Ascending aorta (tissue), 2 donors: ENCODE measurements at regions of chr4 and their contacts with region 1.

Region 1: DNA sequence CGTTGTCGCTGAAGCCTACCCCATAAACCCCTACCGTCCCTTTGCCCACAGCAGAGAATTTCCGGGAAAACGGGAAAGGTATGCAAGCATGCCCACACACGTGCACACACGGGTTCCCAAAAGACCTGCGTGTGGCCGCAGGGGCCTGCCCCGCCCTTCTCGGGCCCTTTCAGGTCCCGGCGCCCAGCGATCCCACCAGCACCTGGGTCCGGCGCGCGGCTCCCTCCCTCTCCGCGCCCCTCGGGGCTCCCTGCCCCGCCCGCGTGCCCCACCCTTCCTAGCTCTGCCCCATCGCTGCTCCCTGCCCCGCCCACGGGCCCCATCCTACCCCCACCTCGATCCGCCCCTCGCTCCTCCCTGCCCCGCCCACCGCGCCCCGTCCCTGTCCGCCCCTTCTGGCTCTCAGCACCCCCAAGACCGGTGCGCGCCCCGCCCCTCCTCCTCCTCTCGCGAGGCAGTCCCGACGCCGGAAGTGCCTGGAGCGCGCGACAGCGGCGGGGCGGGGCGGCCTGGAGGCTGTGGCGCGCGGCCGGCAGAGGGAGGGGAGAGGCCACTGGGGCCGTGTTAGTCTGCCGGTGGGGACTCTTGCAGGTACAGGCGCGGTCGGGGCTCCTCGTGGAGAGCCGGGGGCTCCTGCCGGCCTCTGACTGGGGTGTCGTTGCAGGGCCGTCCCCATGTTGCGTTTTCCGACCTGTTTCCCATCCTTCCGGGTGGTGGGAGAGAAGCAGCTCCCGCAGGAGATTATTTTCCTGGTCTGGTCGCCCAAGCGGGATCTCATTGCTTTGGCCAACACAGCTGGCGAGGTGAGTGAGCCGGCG is at the start of gene ANAPC4:
- DNase-seq: peak; percentile 83 to 95
- H3K4me3 ChIP-seq: peak within 1 kb of the TSS; percentile 79 to 94
- H3K27ac ChIP-seq: peak within 1 kb of the TSS; percentile 71 to 85
- H3K4me1 ChIP-seq: peaks cover 0 to 3% of the 10 kb centered on the region in 2 donors
- H3K27me3 ChIP-seq: no peaks in the 10 kb centered on the region
- CTCF ChIP-seq: peak in 1 of 3 experiments; percentile 3
- total RNA-seq, gene ANAPC4: 23.4 TPM

Region 2: DNA sequence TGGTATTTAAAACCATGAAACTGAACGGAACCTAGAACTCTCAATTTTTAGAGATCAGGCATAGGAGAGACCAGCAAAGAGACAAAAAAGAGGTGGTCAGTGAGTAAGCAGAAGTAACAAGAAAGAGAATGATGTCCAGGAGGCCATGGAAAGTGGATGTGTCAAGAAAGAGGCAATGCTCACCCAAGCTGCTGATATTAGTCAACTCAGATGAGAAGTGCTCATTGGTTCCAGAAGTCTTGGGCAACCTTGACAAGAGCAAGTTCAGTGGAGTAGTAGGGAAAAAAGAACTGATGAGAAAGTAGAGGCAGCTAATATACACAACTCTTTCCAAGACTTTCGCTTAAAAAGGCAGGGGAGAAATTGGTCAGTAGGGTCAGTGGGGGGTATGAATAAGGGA is 441.1 kb before region 1 on chr4:
- intact Hi-C with region 1: no loop called
- DNase-seq: no peak
- H3K4me3 ChIP-seq: no peak overlapping the region
- H3K27ac ChIP-seq: no peak overlapping the region
- H3K4me1 ChIP-seq: no peaks in the 10 kb centered on the region
- H3K27me3 ChIP-seq: no peaks in the 10 kb centered on the region
- CTCF ChIP-seq: no peak

Region 3: GRCh38 chr4:25290490-25291067 is 86.4 kb before region 1 on chr4:
- intact Hi-C with region 1: no loop called
- DNase-seq: no peak
- H3K4me3 ChIP-seq: no peak overlapping the region
- H3K27ac ChIP-seq: no peak overlapping the region
- H3K4me1 ChIP-seq: no peaks in the 10 kb centered on the region
- H3K27me3 ChIP-seq: no peaks in the 10 kb centered on the region
- CTCF ChIP-seq: no peak

Region 4: GRCh38 chr4:25312496-25313200 is 64.3 kb before region 1 on chr4 and contains the start of gene ZCCHC4:
- intact Hi-C with region 1: loop called (anchors 2 kb)
- DNase-seq: peak; percentile 43 to 94
- H3K4me3 ChIP-seq: peak within 1 kb of the TSS; percentile 67 to 85
- H3K27ac ChIP-seq: peak within 1 kb of the TSS in 1 of 2 donors; percentile 78
- H3K4me1 ChIP-seq: peaks cover 0 to 6% of the 10 kb centered on the region in 2 donors
- H3K27me3 ChIP-seq: no peaks in the 10 kb centered on the region
- CTCF ChIP-seq: peak; percentile 78 to 99 (median 92)
- total RNA-seq, gene ZCCHC4: 1.7 TPM

Region 5: GRCh38 chr4:25330905-25331808 is 45.8 kb before region 1 on chr4:
- intact Hi-C with region 1: no loop called
- DNase-seq: no peak
- H3K4me3 ChIP-seq: peak overlapping the region; percentile 18 to 49
- H3K27ac ChIP-seq: peak overlapping the region; percentile 41 to 56
- H3K4me1 ChIP-seq: peaks cover 0 to 4% of the 10 kb centered on the region in 2 donors
- H3K27me3 ChIP-seq: no peaks in the 10 kb centered on the region
- CTCF ChIP-seq: no peak

Region 6: DNA sequence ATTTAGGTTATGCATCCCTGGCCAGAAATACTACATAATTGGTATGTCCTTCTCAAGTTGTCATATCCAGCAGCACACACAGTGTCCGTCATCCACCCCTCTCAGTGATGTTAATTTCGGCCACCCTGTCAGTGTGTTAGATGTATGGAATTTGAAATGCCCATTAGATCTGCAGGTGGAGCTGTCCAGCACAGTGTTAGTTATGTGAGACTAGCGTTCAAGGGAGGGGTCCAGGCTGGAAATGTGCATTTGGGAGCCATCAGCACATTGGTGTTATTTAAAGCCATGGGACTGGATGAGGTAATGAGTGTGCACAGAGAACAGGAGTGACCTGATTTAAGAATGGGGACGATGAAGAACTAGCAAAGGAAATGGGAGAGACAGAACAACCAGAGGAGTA is 22.5 kb after region 1 on chr4:
- intact Hi-C with region 1: no loop called
- DNase-seq: no peak
- H3K4me3 ChIP-seq: no peak overlapping the region
- H3K27ac ChIP-seq: no peak overlapping the region
- H3K4me1 ChIP-seq: no peaks in the 10 kb centered on the region
- H3K27me3 ChIP-seq: no peaks in the 10 kb centered on the region
- CTCF ChIP-seq: no peak